MCF 10A (cell line): ENCODE measurements at regions of chr11 and their contacts with region 1.

Region 1: GRCh38 chr11:119417726-119418540 is 5.0 kb downstream of the THY1 start:
- DNase-seq: peak; percentile 87
- H3K4me3 Mint-ChIP-seq: peak overlapping the region; percentile 66
- H3K27ac Mint-ChIP-seq: peak overlapping the region; percentile 93
- H3K4me1 Mint-ChIP-seq: peaks cover 23% of the 10 kb centered on the region
- H3K27me3 Mint-ChIP-seq: peaks cover 12% of the 10 kb centered on the region
- CTCF ChIP-seq: no peak

Region 2: GRCh38 chr11:119356349-119357031 is 61.4 kb before region 1 on chr11:
- CTCF ChIA-PET with region 1: interaction called, 12 read pairs
- POLR2A ChIA-PET with region 1: interaction called, 9 read pairs
- intact Hi-C with region 1: no loop called
- DNase-seq: peak; percentile 80
- H3K4me3 Mint-ChIP-seq: peak overlapping the region; percentile 79
- H3K27ac Mint-ChIP-seq: no peak overlapping the region
- H3K4me1 Mint-ChIP-seq: peaks cover 41% of the 10 kb centered on the region
- H3K27me3 Mint-ChIP-seq: no peaks in the 10 kb centered on the region
- CTCF ChIP-seq: peak; percentile 92